Activated naive CD4-positive, alpha-beta T cell treated with anti-CD3 and anti-CD28 coated beads for 36 hours (primary cell): ENCODE measurements at regions of chr1 and their contacts with region 1.

Region 1: GRCh38 chr1:199173356-199173755 is 534.5 kb downstream of the PTPRC start:
- DNase-seq: peak; percentile 44
- H3K4me3 Mint-ChIP-seq: no peak overlapping the region
- H3K27ac Mint-ChIP-seq: no peak overlapping the region
- H3K4me1 Mint-ChIP-seq: peaks cover 45% of the 10 kb centered on the region
- H3K27me3 Mint-ChIP-seq: peaks cover 3% of the 10 kb centered on the region

Region 2: GRCh38 chr1:198253668-198254067 is 919.7 kb before region 1 on chr1:
- CTCF ChIA-PET with region 1: no interaction called
- intact Hi-C with region 1: loop called (anchors 1 kb)
- DNase-seq: no peak
- H3K4me3 Mint-ChIP-seq: no peak overlapping the region
- H3K27ac Mint-ChIP-seq: no peak overlapping the region
- H3K4me1 Mint-ChIP-seq: peaks cover 46% of the 10 kb centered on the region
- H3K27me3 Mint-ChIP-seq: no peaks in the 10 kb centered on the region

Region 3: DNA sequence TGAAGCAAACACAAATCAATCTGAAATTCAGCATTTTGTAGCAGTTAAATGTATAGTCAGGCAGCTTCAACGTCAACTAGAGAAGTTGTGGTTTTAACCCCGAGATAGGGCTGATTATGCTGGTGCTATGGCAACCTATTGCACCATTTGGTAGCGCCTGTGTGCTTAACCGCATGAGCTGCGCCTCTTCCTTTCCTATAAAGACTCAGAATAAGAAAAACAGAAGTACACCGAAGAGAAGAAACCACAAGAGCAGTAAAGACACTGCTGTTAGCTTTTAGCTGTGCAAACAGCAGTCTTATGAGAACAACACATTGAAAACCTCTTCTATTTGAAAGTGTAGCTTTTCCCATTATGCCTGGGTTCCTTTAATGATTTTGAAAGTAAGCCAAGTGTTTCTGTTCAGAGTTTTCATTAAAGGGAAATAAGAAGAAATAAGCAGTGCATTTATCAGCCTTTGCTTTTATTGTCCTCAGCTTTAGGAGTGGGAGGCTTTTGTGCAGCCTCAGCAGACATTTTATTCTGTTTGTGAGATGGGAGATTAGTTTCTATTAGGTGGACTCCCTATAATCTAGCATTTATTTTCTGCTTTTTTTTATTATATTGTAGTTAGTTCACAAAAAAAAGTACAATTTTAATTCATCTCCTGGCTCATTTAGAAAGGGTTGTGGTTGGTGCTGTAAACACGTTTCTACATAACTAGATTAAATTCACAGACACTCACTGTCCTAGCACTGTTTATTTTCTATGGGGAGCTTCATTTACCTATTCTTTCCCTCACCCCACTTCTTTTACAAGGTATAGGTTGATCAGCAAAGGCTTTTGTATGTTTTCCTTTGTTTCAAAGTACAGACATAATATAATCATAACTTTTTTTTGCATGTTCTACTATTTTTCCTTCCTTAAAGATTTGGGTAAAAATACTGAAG is 491.3 kb before region 1 on chr1:
- CTCF ChIA-PET with region 1: no interaction called
- intact Hi-C with region 1: loop called (anchors 2 kb)
- DNase-seq: peak; percentile 86
- H3K4me3 Mint-ChIP-seq: peak overlapping the region; percentile 61
- H3K27ac Mint-ChIP-seq: peak overlapping the region; percentile 99
- H3K4me1 Mint-ChIP-seq: peaks cover 86% of the 10 kb centered on the region
- H3K27me3 Mint-ChIP-seq: no peaks in the 10 kb centered on the region

Region 4: DNA sequence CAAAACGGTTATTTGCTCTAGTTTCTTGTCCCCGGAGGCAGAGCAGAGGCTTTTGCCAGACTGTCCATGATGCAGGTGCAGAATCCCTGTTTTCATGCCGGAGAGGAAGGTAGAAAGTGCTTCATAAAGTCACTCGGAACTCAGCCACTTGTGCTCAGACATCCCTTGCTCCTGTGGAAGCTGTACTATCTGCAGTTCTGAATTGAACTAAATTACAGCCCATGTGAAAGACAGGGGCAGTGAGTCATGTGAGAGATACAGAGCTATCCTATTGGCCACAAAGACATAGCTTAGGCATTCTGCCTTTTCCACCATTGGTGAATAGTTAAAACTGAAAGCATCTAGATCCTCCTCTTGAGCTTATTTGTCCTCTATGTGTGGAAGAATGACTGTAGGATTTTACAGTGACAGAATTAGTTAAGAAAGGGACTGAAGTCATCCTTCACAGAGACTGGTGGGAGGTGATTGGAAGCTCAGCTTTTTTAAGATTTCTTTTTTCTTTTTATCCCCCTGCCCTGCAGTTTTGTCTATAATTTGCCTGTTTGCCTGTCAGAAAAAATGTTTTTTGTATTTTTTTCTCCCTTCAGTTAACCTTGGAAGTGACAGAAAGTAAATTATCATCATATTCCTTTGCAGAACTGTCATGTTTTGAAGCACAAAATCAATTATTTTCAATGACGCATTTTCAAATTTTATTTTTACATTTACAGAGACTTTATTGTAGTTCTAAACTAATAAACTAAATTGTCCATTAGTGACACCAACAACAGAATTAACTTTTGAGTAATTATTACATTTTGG is 235.9 kb before region 1 on chr1:
- CTCF ChIA-PET with region 1: no interaction called
- intact Hi-C with region 1: loop called (anchors 2 kb)
- DNase-seq: peak; percentile 72
- H3K4me3 Mint-ChIP-seq: peak overlapping the region; percentile 89
- H3K27ac Mint-ChIP-seq: peak overlapping the region; percentile 84
- H3K4me1 Mint-ChIP-seq: peaks cover 21% of the 10 kb centered on the region
- H3K27me3 Mint-ChIP-seq: no peaks in the 10 kb centered on the region

Region 5: GRCh38 chr1:198970912-198971311 is 202.4 kb before region 1 on chr1:
- CTCF ChIA-PET with region 1: no interaction called
- intact Hi-C with region 1: no loop called
- DNase-seq: no peak
- H3K4me3 Mint-ChIP-seq: no peak overlapping the region
- H3K27ac Mint-ChIP-seq: no peak overlapping the region
- H3K4me1 Mint-ChIP-seq: peaks cover 24% of the 10 kb centered on the region
- H3K27me3 Mint-ChIP-seq: no peaks in the 10 kb centered on the region

Region 6: GRCh38 chr1:199226163-199226562 is 52.8 kb after region 1 on chr1:
- CTCF ChIA-PET with region 1: no interaction called
- intact Hi-C with region 1: loop called (anchors 1 kb)
- DNase-seq: peak; percentile 66
- H3K4me3 Mint-ChIP-seq: peak overlapping the region; percentile 46
- H3K27ac Mint-ChIP-seq: peak overlapping the region; percentile 27
- H3K4me1 Mint-ChIP-seq: peaks cover 23% of the 10 kb centered on the region
- H3K27me3 Mint-ChIP-seq: no peaks in the 10 kb centered on the region

Region 7: GRCh38 chr1:199333180-199333579 is 159.8 kb after region 1 on chr1:
- CTCF ChIA-PET with region 1: no interaction called
- intact Hi-C with region 1: no loop called
- DNase-seq: no peak
- H3K4me3 Mint-ChIP-seq: no peak overlapping the region
- H3K27ac Mint-ChIP-seq: no peak overlapping the region
- H3K4me1 Mint-ChIP-seq: no peaks in the 10 kb centered on the region
- H3K27me3 Mint-ChIP-seq: peaks cover 4% of the 10 kb centered on the region

Region 8: GRCh38 chr1:199551967-199552565 is 378.7 kb after region 1 on chr1:
- CTCF ChIA-PET with region 1: interaction called, 5 read pairs
- intact Hi-C with region 1: loop called (anchors 5 kb)
- DNase-seq: peak; percentile 61
- H3K4me3 Mint-ChIP-seq: no peak overlapping the region
- H3K27ac Mint-ChIP-seq: no peak overlapping the region
- H3K4me1 Mint-ChIP-seq: no peaks in the 10 kb centered on the region
- H3K27me3 Mint-ChIP-seq: peaks cover 10% of the 10 kb centered on the region

Region 9: DNA sequence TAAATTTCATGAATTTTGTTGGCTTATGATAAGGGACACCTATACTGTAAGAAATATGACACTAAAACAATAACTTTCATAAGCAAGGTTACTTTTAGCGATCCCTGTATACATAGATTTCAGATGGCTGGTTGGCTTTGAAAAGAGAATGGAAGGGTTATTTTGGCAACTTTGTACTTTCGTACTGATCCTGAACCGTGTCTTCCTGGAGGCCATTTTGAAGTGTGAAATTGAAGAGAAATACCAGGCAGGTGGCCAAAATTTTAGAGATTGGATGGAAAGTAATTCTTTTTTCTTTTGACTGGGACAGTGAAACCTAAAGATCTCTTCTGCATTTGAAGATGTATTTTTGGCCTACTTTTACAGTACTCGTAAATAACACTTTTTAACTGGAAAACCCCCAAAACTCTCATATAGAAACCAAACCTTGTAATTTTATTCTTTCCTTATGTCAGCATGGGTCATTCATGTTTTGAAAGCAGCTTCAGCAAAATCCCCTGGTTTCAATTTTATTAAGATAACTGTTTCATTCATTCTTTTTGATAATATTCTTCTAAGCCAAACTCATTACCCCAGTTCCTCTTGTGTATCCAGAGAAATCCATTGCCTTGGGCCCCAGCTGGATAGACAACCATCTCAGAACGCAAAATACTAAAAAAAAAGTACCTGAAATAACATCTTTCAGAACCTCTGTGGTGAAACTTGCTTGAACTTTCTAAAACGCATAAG is 1274.8 kb after region 1 on chr1:
- CTCF ChIA-PET with region 1: no interaction called
- intact Hi-C with region 1: loop called (anchors 10 kb)
- DNase-seq: peak; percentile 23
- H3K4me3 Mint-ChIP-seq: no peak overlapping the region
- H3K27ac Mint-ChIP-seq: peak overlapping the region; percentile 84
- H3K4me1 Mint-ChIP-seq: peaks cover 41% of the 10 kb centered on the region
- H3K27me3 Mint-ChIP-seq: peaks cover 7% of the 10 kb centered on the region